CD4-positive, alpha-beta T cell (primary cell): ENCODE measurements at regions of chr11 and their contacts with region 1.

Region 1: DNA sequence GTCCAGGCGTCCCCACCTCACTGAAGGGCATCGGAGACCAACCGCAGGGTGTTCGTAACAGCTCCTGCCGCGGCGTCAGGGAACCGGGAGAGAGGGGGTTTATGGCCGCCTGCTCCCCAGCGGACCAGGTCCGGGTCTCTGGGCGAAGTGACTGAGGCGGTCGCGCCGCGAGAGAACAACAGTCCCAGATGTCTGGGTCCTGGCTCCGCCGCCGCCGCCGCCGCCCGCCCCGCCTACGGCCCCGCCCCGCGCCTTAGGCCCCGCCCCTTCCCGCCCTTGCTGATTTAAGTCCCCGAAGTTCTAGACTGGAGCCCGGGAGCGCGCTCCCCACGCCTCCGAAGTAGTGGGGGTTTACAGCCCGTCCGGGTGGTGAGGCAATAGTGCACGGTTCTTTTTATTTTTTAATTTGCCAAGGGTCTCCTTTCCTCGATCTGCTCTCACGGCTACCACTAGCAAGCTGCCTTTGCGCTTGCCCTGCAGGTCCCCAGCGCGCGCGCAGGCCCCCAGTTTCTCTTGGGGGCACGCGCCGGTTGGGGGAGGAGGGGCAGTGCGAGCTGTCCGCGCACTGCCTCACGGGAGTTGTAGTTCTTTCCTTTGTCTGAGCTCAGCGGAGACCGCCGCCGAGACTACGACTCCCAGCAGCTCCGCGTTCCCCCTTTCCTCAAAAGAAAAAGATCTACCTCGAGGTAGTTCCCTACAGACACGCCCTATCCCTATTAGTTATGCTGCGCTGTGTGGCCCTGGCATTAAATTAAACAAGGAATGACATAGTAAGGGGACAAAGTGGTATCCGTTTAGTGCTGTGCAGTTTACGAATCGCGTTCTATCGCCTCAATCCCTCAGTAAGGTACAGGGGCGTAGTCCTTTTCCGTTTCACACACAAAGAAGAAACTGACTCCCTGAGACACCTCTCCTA is at the start of gene PGM2L1:
- DNase-seq: peak; percentile 86 to 96 (median 92)
- ATAC-seq: peak; percentile 84
- H3K4me3 ChIP-seq: peak within 1 kb of the TSS; percentile 96
- H3K4me3 Mint-ChIP-seq: peak within 1 kb of the TSS; percentile 100
- H3K27ac ChIP-seq: peak within 1 kb of the TSS; percentile 68 to 77
- H3K27ac Mint-ChIP-seq: peak within 1 kb of the TSS; percentile 89
- H3K4me1 ChIP-seq: peaks cover 3% of the 10 kb centered on the region
- H3K4me1 Mint-ChIP-seq: peaks cover 30% of the 10 kb centered on the region
- H3K27me3 ChIP-seq: no peaks in the 10 kb centered on the region
- H3K27me3 Mint-ChIP-seq: no peaks in the 10 kb centered on the region
- CTCF ChIP-seq: no peak
- total RNA-seq, gene PGM2L1: 10.2 to 11.8 TPM

Region 2: GRCh38 chr11:73787643-73788537 is 610.6 kb before region 1 on chr11 and contains the start of gene MRPL48:
- CTCF ChIA-PET with region 1: no interaction called
- POLR2A ChIA-PET with region 1: no interaction called
- intact Hi-C with region 1: loop called in 1 of 2 experiments (anchors 10 kb)
- DNase-seq: peak; percentile 78 to 93 (median 84)
- ATAC-seq: peak; percentile 99
- H3K4me3 ChIP-seq: peak within 1 kb of the TSS; percentile 93
- H3K4me3 Mint-ChIP-seq: peak within 1 kb of the TSS; percentile 99
- H3K27ac ChIP-seq: peak within 1 kb of the TSS; percentile 80 to 87
- H3K27ac Mint-ChIP-seq: peak within 1 kb of the TSS; percentile 100
- H3K4me1 ChIP-seq: peaks cover 19% of the 10 kb centered on the region
- H3K4me1 Mint-ChIP-seq: peaks cover 31% of the 10 kb centered on the region
- H3K27me3 ChIP-seq: no peaks in the 10 kb centered on the region
- H3K27me3 Mint-ChIP-seq: no peaks in the 10 kb centered on the region
- CTCF ChIP-seq: no peak
- total RNA-seq, gene MRPL48: 9.5 to 10.1 TPM

Region 3: DNA sequence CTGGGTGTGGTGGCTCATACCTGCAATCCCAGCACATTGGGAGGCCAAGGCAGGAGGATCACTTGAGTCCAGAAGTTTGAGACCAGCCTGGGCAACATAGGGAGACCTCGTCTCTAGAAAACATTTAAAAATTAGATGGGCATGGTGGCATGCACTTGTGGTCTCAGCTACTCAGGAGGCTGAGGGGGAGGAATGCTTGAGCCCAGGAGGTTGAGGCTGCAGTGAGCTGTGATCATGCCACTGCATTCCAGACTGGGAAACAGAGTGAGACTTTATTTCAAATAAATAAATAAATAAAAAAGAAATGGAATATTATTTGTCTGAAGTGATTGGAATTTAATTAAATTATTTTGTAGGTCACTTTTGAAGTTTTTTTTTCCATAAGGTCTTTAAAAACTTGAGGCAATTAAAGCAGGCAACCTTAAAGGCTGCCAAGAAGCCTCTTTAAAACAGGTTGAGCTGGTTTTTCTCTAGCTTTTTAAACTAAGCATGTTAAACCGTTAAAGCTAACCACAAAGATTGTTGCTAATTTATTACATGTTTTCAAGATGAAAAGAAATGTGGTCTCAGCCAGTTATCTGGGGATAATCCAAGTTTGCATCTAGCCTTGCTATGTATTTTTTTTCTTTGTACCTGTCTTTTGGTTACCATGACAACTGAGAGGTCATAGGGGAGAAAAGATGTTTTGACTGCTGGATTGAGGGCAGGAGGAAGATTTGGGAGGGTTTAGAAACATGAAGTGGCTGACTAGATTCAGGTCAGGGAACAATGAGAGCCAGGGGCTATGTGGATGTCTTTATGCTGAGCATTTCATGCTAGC is 18.7 kb after region 1 on chr11:
- CTCF ChIA-PET with region 1: no interaction called
- POLR2A ChIA-PET with region 1: no interaction called
- intact Hi-C with region 1: loop called in 1 of 2 experiments (anchors 1 kb)
- DNase-seq: peak in 4 of 14 experiments; percentile 17 to 73 (median 54)
- ATAC-seq: peak; percentile 82
- H3K4me3 ChIP-seq: no peak overlapping the region
- H3K4me3 Mint-ChIP-seq: peak overlapping the region; percentile 1
- H3K27ac ChIP-seq: no peak overlapping the region
- H3K27ac Mint-ChIP-seq: peak overlapping the region; percentile 82
- H3K4me1 ChIP-seq: peaks cover 13% of the 10 kb centered on the region
- H3K4me1 Mint-ChIP-seq: peaks cover 23% of the 10 kb centered on the region
- H3K27me3 ChIP-seq: no peaks in the 10 kb centered on the region
- H3K27me3 Mint-ChIP-seq: no peaks in the 10 kb centered on the region
- CTCF ChIP-seq: no peak

Region 4: DNA sequence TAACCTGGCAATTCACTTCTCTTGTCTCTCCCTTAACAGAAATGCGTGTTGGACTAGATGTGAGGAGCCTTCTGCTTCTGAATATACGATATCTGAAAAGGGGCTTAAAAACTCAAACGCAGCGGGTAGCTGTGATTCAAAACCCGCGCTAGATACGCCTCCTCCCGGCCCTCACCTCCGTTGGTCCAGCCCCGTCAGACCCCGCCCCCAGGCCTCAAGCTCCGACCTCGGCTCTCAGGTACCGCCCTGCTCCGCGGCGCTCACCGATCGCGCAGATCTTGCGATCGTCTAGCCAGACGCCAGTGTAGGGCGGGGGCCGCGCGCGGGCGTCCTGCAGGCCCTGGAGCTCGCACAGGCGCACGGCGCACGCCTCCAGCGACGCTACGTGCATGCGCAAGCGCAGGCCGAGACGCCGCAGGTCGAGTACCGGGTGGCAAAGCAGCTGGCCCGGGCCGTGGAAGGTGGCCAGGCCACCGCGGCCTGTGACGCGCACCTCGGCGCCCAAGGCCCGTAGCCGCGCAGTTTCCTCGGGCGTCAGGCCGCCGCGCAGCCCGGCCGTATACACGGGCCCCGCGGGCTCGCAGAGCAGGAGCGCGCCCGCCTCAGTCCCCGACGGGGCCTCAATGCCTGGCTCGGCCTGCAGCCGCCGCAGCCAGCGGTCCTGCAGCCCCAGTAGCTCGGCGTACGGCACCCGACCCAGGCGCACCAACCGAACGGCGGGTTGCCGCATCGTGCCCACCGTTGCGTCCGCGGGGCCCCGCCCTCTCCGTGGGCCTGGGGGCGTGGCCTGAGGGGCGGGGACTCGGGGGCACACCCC is 94.7 kb after region 1 on chr11 and contains the start of gene LIPT2:
- CTCF ChIA-PET with region 1: no interaction called
- POLR2A ChIA-PET with region 1: interaction called, 48 read pairs
- intact Hi-C with region 1: loop called (anchors 1 to 5 kb)
- DNase-seq: peak; percentile 94 to 99 (median 98)
- ATAC-seq: peak; percentile 95
- H3K4me3 ChIP-seq: peak within 1 kb of the TSS; percentile 66
- H3K4me3 Mint-ChIP-seq: peak within 1 kb of the TSS; percentile 91
- H3K27ac ChIP-seq: peak within 1 kb of the TSS; percentile 61 to 94
- H3K27ac Mint-ChIP-seq: peak within 1 kb of the TSS; percentile 86
- H3K4me1 ChIP-seq: peaks cover 12% of the 10 kb centered on the region
- H3K4me1 Mint-ChIP-seq: peaks cover 41% of the 10 kb centered on the region
- H3K27me3 ChIP-seq: no peaks in the 10 kb centered on the region
- H3K27me3 Mint-ChIP-seq: no peaks in the 10 kb centered on the region
- CTCF ChIP-seq: no peak
- total RNA-seq, gene LIPT2: 10.7 to 10.9 TPM

Region 5: GRCh38 chr11:74636633-74637184 is 238.2 kb after region 1 on chr11:
- CTCF ChIA-PET with region 1: no interaction called
- POLR2A ChIA-PET with region 1: no interaction called
- intact Hi-C with region 1: no loop called
- DNase-seq: no peak
- ATAC-seq: no peak
- H3K4me3 ChIP-seq: no peak overlapping the region
- H3K4me3 Mint-ChIP-seq: no peak overlapping the region
- H3K27ac ChIP-seq: no peak overlapping the region
- H3K27ac Mint-ChIP-seq: no peak overlapping the region
- H3K4me1 ChIP-seq: no peaks in the 10 kb centered on the region
- H3K4me1 Mint-ChIP-seq: no peaks in the 10 kb centered on the region
- H3K27me3 ChIP-seq: no peaks in the 10 kb centered on the region
- H3K27me3 Mint-ChIP-seq: no peaks in the 10 kb centered on the region
- CTCF ChIP-seq: no peak

Region 6: GRCh38 chr11:74748211-74749127 is 350.0 kb after region 1 on chr11 and contains the start of gene RNF169:
- CTCF ChIA-PET with region 1: no interaction called
- POLR2A ChIA-PET with region 1: no interaction called
- intact Hi-C with region 1: loop called in 1 of 2 experiments (anchors 5 kb)
- DNase-seq: peak; percentile 79 to 96 (median 84)
- ATAC-seq: peak; percentile 98
- H3K4me3 ChIP-seq: peak within 1 kb of the TSS; percentile 62
- H3K4me3 Mint-ChIP-seq: peak within 1 kb of the TSS; percentile 99
- H3K27ac ChIP-seq: peak within 1 kb of the TSS; percentile 63 to 76
- H3K27ac Mint-ChIP-seq: peak within 1 kb of the TSS; percentile 78
- H3K4me1 ChIP-seq: peaks cover 33% of the 10 kb centered on the region
- H3K4me1 Mint-ChIP-seq: peaks cover 49% of the 10 kb centered on the region
- H3K27me3 ChIP-seq: no peaks in the 10 kb centered on the region
- H3K27me3 Mint-ChIP-seq: no peaks in the 10 kb centered on the region
- CTCF ChIP-seq: no peak
- total RNA-seq, gene RNF169: 15.2 to 15.5 TPM

Region 7: DNA sequence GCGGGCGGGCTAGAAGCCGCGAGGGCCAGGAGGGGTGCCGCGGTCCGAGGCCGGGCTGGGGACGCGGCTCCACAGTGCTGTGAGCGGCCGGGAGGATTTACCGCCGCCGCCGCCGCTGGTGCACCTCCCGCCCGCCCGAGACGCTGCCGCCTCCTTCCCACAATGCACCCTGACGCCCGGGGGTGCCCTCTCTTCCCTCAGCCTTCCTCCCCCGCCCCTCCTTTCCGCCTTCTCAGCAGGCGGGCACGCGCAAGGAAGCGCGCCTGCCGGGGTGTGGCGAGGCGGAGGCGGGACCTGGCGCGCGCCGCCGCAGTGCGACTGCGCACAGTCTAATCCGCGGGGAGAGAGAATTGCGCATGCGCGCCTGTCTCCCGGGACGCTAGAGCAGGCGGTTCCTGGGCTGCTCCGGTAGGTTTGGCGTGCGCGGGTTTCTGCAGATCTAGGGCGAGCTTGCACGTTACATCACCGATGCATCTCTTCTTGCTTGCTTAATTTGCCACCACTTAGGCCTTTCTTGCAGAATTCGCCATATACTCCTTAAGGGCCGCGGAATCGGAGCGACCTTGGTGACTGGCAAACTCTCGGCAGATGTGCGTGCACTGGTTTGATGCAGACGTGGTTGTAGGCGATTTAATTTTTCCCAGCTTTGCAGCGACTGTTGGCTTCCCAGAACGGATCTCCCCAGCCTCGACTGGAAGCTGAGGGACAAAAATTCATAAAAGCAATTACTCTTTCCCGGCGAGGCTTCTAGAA is 1982.6 kb after region 1 on chr11 and contains the starts of genes GVQW3 and THAP12:
- CTCF ChIA-PET with region 1: no interaction called
- POLR2A ChIA-PET with region 1: no interaction called
- intact Hi-C with region 1: loop called in 1 of 2 experiments (anchors 5 kb)
- DNase-seq: peak; percentile 93 to 99 (median 97)
- ATAC-seq: peak; percentile 89
- H3K4me3 ChIP-seq: peak within 1 kb of the TSS; percentile 78
- H3K4me3 Mint-ChIP-seq: peak within 1 kb of the TSS; percentile 97
- H3K27ac ChIP-seq: peak within 1 kb of the TSS; percentile 11 to 24
- H3K27ac Mint-ChIP-seq: peak within 1 kb of the TSS; percentile 87
- H3K4me1 ChIP-seq: peaks cover 45% of the 10 kb centered on the region
- H3K4me1 Mint-ChIP-seq: peaks cover 76% of the 10 kb centered on the region
- H3K27me3 ChIP-seq: no peaks in the 10 kb centered on the region
- H3K27me3 Mint-ChIP-seq: no peaks in the 10 kb centered on the region
- CTCF ChIP-seq: no peak
- total RNA-seq, gene GVQW3: 1.8 TPM
- total RNA-seq, gene THAP12: 34.8 to 36.3 TPM